ENCODE measurements at regions of chr22 and their contacts with region 1.

Region 1: GRCh38 chr22:20116951-20117645 is at the start of gene TRMT2A:
- DNase-seq: peak; percentile 97
- H3K4me3 Mint-ChIP-seq: peak within 1 kb of the TSS; percentile 85
- H3K27ac Mint-ChIP-seq: peak within 1 kb of the TSS; percentile 84
- H3K4me1 Mint-ChIP-seq: peaks cover 9% of the 10 kb centered on the region
- H3K27me3 Mint-ChIP-seq: no peaks in the 10 kb centered on the region
- CTCF ChIP-seq: no peak
- total RNA-seq, gene TRMT2A: 39.0 and 47.1 TPM in 2 replicates

Region 2: GRCh38 chr22:20080445-20080775 is 36.7 kb before region 1 on chr22:
- CTCF ChIA-PET with region 1: no interaction called
- POLR2A ChIA-PET with region 1: interaction called, 13 read pairs
- intact Hi-C with region 1: no loop called
- DNase-seq: peak; percentile 51
- H3K4me3 Mint-ChIP-seq: peak overlapping the region; percentile 92
- H3K27ac Mint-ChIP-seq: peak overlapping the region; percentile 79
- H3K4me1 Mint-ChIP-seq: peaks cover 31% of the 10 kb centered on the region
- H3K27me3 Mint-ChIP-seq: no peaks in the 10 kb centered on the region
- CTCF ChIP-seq: no peak

Region 3: GRCh38 chr22:20130739-20131596 is 13.9 kb after region 1 on chr22:
- CTCF ChIA-PET with region 1: no interaction called
- POLR2A ChIA-PET with region 1: interaction called, 17 read pairs
- intact Hi-C with region 1: no loop called
- DNase-seq: peak; percentile 65
- H3K4me3 Mint-ChIP-seq: peak overlapping the region; percentile 63
- H3K27ac Mint-ChIP-seq: no peak overlapping the region
- H3K4me1 Mint-ChIP-seq: no peaks in the 10 kb centered on the region
- H3K27me3 Mint-ChIP-seq: no peaks in the 10 kb centered on the region
- CTCF ChIP-seq: no peak

Region 4: DNA sequence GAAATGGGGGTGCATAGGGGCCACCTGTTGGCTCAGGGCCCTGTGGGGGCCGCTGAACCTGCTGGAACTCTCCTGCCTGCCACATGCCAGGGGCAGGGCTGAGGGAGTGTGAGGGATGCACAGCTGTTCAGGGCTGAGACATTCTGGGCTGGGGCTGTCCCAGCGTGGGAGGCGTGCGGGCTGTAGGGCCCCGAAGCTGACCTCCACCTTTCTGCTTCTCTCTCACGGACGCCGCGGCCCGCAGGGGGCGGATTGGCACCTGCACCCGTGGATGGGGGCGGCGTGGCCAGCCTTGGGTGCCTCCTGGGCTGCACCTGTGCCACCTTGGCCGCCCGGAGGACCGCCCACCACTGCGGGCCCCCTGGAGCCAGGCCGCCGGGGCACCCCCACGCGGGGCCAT is 29.7 kb after region 1 on chr22:
- CTCF ChIA-PET with region 1: no interaction called
- POLR2A ChIA-PET with region 1: no interaction called
- intact Hi-C with region 1: no loop called
- DNase-seq: no peak
- H3K4me3 Mint-ChIP-seq: no peak overlapping the region
- H3K27ac Mint-ChIP-seq: no peak overlapping the region
- H3K4me1 Mint-ChIP-seq: no peaks in the 10 kb centered on the region
- H3K27me3 Mint-ChIP-seq: no peaks in the 10 kb centered on the region
- CTCF ChIP-seq: no peak

Region 5: GRCh38 chr22:20211997-20212753 is 95.1 kb after region 1 on chr22:
- CTCF ChIA-PET with region 1: no interaction called
- POLR2A ChIA-PET with region 1: no interaction called
- intact Hi-C with region 1: no loop called
- DNase-seq: peak; percentile 58
- H3K4me3 Mint-ChIP-seq: no peak overlapping the region
- H3K27ac Mint-ChIP-seq: no peak overlapping the region
- H3K4me1 Mint-ChIP-seq: peaks cover 8% of the 10 kb centered on the region
- H3K27me3 Mint-ChIP-seq: no peaks in the 10 kb centered on the region
- CTCF ChIP-seq: no peak

Region 6: GRCh38 chr22:20229916-20230775 is 113.0 kb after region 1 on chr22:
- CTCF ChIA-PET with region 1: no interaction called
- POLR2A ChIA-PET with region 1: no interaction called
- intact Hi-C with region 1: no loop called
- DNase-seq: no peak
- H3K4me3 Mint-ChIP-seq: no peak overlapping the region
- H3K27ac Mint-ChIP-seq: no peak overlapping the region
- H3K4me1 Mint-ChIP-seq: no peaks in the 10 kb centered on the region
- H3K27me3 Mint-ChIP-seq: no peaks in the 10 kb centered on the region
- CTCF ChIP-seq: no peak